Activated CD8-positive, alpha-beta T cell treated with anti-CD3 and anti-CD28 coated beads for 36 hours (primary cell): ENCODE measurements at regions of chr12 and their contacts with region 1.

Region 1: GRCh38 chr12:55996715-55997534 is at the start of gene SUOX:
- DNase-seq: peak; percentile 65
- ATAC-seq: peak; percentile 88
- H3K4me3 Mint-ChIP-seq: peak within 1 kb of the TSS; percentile 74
- H3K27ac Mint-ChIP-seq: peak within 1 kb of the TSS; percentile 51
- H3K4me1 Mint-ChIP-seq: peaks cover 24% of the 10 kb centered on the region
- H3K27me3 Mint-ChIP-seq: peaks cover 11% of the 10 kb centered on the region
- CTCF ChIP-seq: no peak
- total RNA-seq, gene SUOX: 4.6 to 6.2 TPM

Region 2: DNA sequence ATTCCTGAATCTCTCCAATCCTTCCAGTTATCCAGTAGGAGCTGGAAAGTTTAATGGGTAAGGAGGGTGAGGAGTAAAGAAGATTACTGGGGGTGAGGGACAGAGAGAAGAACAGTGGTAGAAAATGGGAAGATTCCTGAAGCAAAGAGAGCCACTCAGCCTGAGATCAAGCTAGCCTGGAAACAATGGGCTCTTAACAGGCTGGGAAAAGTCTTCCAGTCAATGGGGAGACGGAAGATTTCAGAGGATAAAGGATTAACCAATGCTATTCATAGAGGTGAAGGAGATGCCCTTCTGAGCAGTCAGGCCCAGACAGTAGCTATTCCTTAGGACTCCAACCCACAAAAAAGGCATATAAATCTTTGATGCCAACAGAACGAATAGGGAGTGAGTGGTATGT is 239.2 kb before region 1 on chr12:
- CTCF ChIA-PET with region 1: no interaction called
- POLR2A ChIA-PET with region 1: no interaction called
- intact Hi-C with region 1: no loop called
- DNase-seq: no peak
- ATAC-seq: no peak
- H3K4me3 Mint-ChIP-seq: no peak overlapping the region
- H3K27ac Mint-ChIP-seq: peak overlapping the region; percentile 25
- H3K4me1 Mint-ChIP-seq: peaks cover 19% of the 10 kb centered on the region
- H3K27me3 Mint-ChIP-seq: no peaks in the 10 kb centered on the region
- CTCF ChIP-seq: no peak

Region 3: DNA sequence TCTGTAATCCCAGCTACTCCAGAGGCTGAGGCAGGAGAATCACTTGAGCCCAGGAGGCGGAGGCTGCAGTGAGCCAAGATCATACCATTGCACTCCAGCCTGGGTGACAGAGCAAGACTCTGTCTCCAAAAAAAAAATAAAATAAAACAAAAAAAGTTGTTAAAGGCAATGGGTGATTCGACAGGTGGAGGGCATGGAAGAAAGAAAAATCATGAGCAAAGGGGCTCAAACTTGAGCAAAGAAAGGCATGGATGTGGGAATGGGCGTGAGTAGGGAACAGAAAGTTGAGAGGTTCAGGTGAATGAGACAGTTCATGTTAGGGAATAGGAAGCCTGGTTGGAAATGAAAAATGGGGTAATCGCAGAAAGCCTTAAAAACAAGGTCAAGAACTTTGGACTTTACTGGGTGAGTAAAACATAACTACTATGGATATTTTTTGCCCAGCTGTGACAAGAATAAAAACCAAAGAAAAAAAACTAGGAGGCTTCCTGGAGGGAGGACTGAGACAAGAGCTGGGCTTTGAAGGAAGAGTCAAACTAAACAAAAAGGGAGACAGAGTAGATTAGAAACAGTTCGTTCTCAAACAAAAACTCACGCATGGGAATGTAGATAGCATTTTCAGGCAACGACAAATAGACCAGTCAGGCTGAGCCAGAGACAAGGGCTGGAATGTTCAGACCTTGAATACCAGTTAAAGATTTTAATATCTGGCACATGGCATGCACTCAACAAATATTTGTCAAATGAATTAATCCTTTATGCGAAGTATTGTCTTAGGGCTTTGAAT is 88.0 kb before region 1 on chr12:
- CTCF ChIA-PET with region 1: no interaction called
- POLR2A ChIA-PET with region 1: no interaction called
- intact Hi-C with region 1: no loop called
- DNase-seq: no peak
- ATAC-seq: no peak
- H3K4me3 Mint-ChIP-seq: no peak overlapping the region
- H3K27ac Mint-ChIP-seq: no peak overlapping the region
- H3K4me1 Mint-ChIP-seq: peaks cover 14% of the 10 kb centered on the region
- H3K27me3 Mint-ChIP-seq: no peaks in the 10 kb centered on the region
- CTCF ChIP-seq: no peak

Region 4: GRCh38 chr12:55973598-55974307 is 23.2 kb before region 1 on chr12 and contains the start of gene RAB5B:
- CTCF ChIA-PET with region 1: interaction called, 27 read pairs
- POLR2A ChIA-PET with region 1: interaction called, 7 read pairs
- intact Hi-C with region 1: no loop called
- DNase-seq: peak; percentile 99
- ATAC-seq: peak; percentile 93
- H3K4me3 Mint-ChIP-seq: no peak within 1 kb of the TSS
- H3K27ac Mint-ChIP-seq: no peak within 1 kb of the TSS
- H3K4me1 Mint-ChIP-seq: peaks cover 24% of the 10 kb centered on the region
- H3K27me3 Mint-ChIP-seq: no peaks in the 10 kb centered on the region
- CTCF ChIP-seq: no peak
- total RNA-seq, gene RAB5B: 26.0 to 32.4 TPM

Region 5: GRCh38 chr12:56007564-56008559 is 10.9 kb after region 1 on chr12:
- CTCF ChIA-PET with region 1: interaction called, 81 read pairs
- POLR2A ChIA-PET with region 1: interaction called, 3 read pairs
- intact Hi-C with region 1: no loop called
- DNase-seq: peak; percentile 68
- ATAC-seq: peak; percentile 84
- H3K4me3 Mint-ChIP-seq: peak overlapping the region; percentile 85
- H3K27ac Mint-ChIP-seq: peak overlapping the region; percentile 89
- H3K4me1 Mint-ChIP-seq: peaks cover 41% of the 10 kb centered on the region
- H3K27me3 Mint-ChIP-seq: no peaks in the 10 kb centered on the region
- CTCF ChIP-seq: no peak

Region 6: DNA sequence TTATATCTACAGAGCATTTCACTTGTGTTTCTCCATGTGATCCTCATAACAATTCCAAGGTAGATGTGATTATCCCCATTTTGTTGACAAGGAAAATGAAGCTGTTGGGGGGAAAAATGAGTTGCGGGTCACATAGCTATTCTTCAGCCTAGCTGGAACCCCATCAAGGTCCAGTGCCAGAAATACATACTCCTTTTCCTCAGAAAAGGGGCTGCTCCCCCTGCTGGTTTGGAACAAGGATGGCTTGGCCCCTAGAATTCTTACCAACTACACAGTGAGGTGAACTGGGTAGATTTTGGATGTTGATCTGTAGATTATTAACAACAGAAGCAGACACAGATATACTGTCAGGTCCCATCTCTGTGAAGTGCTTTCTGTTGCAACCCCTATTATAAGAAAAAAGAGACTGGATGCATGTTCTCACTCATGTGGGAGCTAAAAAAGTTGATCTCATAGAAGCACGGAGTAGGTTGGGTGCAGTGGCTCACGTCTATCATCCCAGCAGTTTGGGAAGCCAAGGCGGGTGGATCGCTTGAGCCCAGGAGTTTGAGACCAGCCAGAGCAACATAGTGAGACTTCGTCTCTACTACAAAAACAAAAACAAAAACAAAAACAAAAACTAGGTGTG is 32.9 kb after region 1 on chr12:
- CTCF ChIA-PET with region 1: interaction called, 88 read pairs
- POLR2A ChIA-PET with region 1: no interaction called
- intact Hi-C with region 1: loop called (anchors 2 kb)
- DNase-seq: peak; percentile 51
- ATAC-seq: peak; percentile 34
- H3K4me3 Mint-ChIP-seq: no peak overlapping the region
- H3K27ac Mint-ChIP-seq: peak overlapping the region; percentile 80
- H3K4me1 Mint-ChIP-seq: peaks cover 47% of the 10 kb centered on the region
- H3K27me3 Mint-ChIP-seq: no peaks in the 10 kb centered on the region
- CTCF ChIP-seq: peak; percentile 69

Region 7: GRCh38 chr12:56104109-56104814 is 107.3 kb after region 1 on chr12 and contains the start of gene PA2G4:
- CTCF ChIA-PET with region 1: interaction called, 13 read pairs
- POLR2A ChIA-PET with region 1: interaction called, 4 read pairs
- intact Hi-C with region 1: no loop called
- DNase-seq: peak; percentile 100
- ATAC-seq: peak; percentile 94
- H3K4me3 Mint-ChIP-seq: peak within 1 kb of the TSS; percentile 95
- H3K27ac Mint-ChIP-seq: peak within 1 kb of the TSS; percentile 99
- H3K4me1 Mint-ChIP-seq: peaks cover 47% of the 10 kb centered on the region
- H3K27me3 Mint-ChIP-seq: no peaks in the 10 kb centered on the region
- CTCF ChIP-seq: no peak
- total RNA-seq, gene PA2G4: 447 to 455 TPM